PC-3 (cell line): ENCODE measurements at regions of chr18 and their contacts with region 1.

Region 1: DNA sequence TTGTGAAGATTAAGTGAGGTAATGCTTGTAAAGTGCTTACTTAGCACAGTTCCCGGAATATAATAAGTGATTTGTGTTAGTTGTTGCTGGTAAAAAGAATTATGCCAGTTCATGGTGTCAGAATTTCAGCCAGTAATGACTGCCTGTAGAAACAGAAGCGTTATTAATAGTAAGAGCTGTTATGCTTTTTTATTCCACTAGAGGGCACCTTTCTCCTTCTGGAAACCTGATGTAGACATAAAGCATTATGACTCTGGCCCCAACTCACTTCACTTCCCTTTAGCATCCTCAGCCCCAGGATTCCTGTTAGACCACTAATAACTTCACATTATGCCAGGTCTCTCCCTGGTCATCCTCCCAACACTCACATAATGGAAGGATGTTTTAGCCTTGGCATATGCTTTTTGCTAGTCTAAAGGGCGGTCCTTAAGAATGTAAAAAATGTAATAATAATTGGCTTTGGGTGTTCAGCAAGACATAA is 34.9 kb downstream of the C18orf54 start:
- DNase-seq: peak; percentile 90
- ATAC-seq: peak; percentile 27
- H3K4me3 ChIP-seq: no peak overlapping the region
- H3K27ac ChIP-seq: no peak overlapping the region
- H3K4me1 ChIP-seq: peaks cover 25% of the 10 kb centered on the region
- H3K27me3 ChIP-seq: no peaks in the 10 kb centered on the region
- CTCF ChIP-seq: peak; percentile 76

Region 2: GRCh38 chr18:54357660-54358494 is 34.7 kb before region 1 on chr18 and contains the starts of genes C18orf54 and STARD6:
- CTCF ChIA-PET with region 1: no interaction called
- POLR2A ChIA-PET with region 1: interaction called, 4 read pairs
- intact Hi-C with region 1: loop called (anchors 5 kb)
- DNase-seq: peak; percentile 90
- ATAC-seq: peak; percentile 90
- H3K4me3 ChIP-seq: peak within 1 kb of the TSS; percentile 96
- H3K27ac ChIP-seq: peak within 1 kb of the TSS; percentile 49
- H3K4me1 ChIP-seq: peaks cover 18% of the 10 kb centered on the region
- H3K27me3 ChIP-seq: no peaks in the 10 kb centered on the region
- CTCF ChIP-seq: peak; percentile 61
- total RNA-seq, gene C18orf54: 5.1 and 10.5 TPM in 2 replicates
- total RNA-seq, gene STARD6: not detected in 2 replicates

Region 3: DNA sequence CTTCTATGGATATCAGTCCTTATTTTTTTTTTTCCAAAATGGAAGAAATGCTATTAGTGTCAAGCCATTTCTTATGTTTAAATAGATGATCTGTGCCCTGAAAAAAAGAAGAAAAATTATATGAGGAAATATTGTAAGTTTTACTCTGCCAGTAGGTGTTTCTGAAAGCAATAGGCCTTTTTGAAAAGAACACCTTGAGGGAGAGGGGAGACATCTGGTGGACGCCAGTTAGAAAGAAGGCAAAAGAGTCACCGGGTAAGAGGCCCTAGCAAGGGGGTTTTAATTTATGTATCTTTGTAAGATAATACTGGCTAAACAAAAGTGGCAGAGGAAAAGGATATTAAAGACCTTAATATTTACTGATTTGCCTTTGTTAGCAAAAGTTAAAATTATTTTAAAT is 254.6 kb after region 1 on chr18:
- CTCF ChIA-PET with region 1: no interaction called
- POLR2A ChIA-PET with region 1: no interaction called
- intact Hi-C with region 1: loop called (anchors 2 kb)
- DNase-seq: peak; percentile 69
- ATAC-seq: peak; percentile 74
- H3K4me3 ChIP-seq: no peak overlapping the region
- H3K27ac ChIP-seq: no peak overlapping the region
- H3K4me1 ChIP-seq: no peaks in the 10 kb centered on the region
- H3K27me3 ChIP-seq: peaks cover 5% of the 10 kb centered on the region; the same call in 1 of the 2 replicates
- CTCF ChIP-seq: peak; percentile 77

Region 4: GRCh38 chr18:54671291-54671881 is 278.8 kb after region 1 on chr18:
- CTCF ChIA-PET with region 1: no interaction called
- POLR2A ChIA-PET with region 1: no interaction called
- intact Hi-C with region 1: loop called (anchors 2 kb)
- DNase-seq: peak; percentile 70
- ATAC-seq: peak; percentile 29; the same call in 1 of the 2 replicates
- H3K4me3 ChIP-seq: no peak overlapping the region
- H3K27ac ChIP-seq: no peak overlapping the region
- H3K4me1 ChIP-seq: peaks cover 20% of the 10 kb centered on the region
- H3K27me3 ChIP-seq: no peaks in the 10 kb centered on the region
- CTCF ChIP-seq: peak; percentile 73